Activated CD4-positive, alpha-beta memory T cell treated with anti-CD3 and anti-CD28 coated beads for 36 hours (primary cell): ENCODE measurements at regions of chr19 and their contacts with region 1.

Region 1: DNA sequence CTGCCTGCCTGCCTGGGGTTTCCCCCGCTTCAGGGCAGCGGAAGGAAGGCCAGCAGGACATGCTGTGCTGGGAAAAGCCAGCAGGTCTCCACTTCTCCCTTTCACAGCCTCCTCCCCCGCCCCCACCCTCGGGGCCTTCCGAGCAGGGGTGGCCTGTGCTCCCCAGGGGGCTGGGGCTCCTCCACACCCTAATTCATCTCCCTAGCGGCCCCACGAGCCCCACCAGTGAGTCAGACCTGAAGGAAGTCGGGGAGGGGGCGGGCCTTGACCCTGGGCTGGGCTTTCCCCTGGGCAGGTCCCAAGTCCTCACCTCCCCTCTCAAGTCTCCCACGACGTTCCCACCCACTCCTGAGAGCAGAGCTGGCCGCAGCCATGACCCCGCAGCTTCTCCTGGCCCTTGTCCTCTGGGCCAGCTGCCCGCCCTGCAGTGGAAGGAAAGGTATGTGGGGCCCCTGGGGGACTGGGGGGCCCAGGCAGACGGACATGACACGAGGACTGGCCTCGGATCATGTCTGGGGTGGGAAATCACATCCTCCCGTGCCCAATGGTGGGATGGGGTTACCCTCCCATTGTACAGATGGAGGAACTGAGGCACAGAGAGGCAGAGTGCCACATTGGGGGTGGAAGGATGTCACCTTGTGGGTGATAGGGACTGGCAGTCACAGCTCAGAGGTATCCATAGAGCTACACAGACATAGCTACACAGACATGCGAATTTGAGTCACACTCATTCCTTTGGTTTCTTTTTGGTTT is at the start of gene EBI3:
- DNase-seq: peak; percentile 87
- H3K4me3 Mint-ChIP-seq: no peak within 1 kb of the TSS
- H3K27ac Mint-ChIP-seq: peak within 1 kb of the TSS; percentile 89
- H3K4me1 Mint-ChIP-seq: no peaks in the 10 kb centered on the region
- H3K27me3 Mint-ChIP-seq: peaks cover 10% of the 10 kb centered on the region
- total RNA-seq, gene EBI3: 11.0 to 14.2 TPM

Region 2: GRCh38 chr19:3968556-3969434 is 260.6 kb before region 1 on chr19:
- CTCF ChIA-PET with region 1: no interaction called
- POLR2A ChIA-PET with region 1: no interaction called
- intact Hi-C with region 1: no loop called
- DNase-seq: no peak
- H3K4me3 Mint-ChIP-seq: peak overlapping the region; percentile 23
- H3K27ac Mint-ChIP-seq: no peak overlapping the region
- H3K4me1 Mint-ChIP-seq: peaks cover 17% of the 10 kb centered on the region
- H3K27me3 Mint-ChIP-seq: no peaks in the 10 kb centered on the region

Region 3: DNA sequence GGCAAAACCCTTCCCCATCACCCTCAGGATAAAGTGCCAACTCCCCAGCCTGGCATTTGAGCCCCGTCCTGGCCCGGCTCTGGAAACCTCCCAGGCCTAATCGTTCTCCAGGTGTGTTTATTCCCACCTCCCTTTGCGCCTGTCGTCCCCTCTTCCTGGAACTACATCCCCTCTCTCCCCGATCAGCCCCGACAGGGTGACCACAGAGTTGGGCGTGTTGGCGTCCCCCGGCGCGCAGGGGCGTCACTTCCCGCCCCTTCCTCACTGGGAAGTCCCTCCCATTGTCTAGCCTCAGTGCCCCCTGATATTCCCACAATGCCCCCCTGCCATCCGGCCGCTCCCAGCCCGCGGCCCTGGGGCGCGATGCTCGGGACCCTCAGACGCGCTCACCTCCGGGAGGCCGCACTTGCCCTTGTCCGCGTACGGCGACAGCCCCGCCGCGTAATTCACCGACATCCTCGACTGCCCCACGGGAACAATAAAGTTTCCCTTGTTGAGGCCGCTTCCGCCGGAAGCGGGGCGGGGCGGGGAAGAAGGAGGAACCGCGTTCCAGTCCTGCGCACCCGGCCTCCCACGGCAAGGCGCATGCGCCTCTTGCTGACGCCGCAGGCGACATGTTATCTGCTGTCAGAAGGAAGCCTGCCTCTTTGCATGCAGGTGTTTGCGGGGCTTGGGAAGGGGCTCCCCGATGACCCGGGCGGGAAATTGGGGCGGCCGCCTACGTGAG is 47.1 kb before region 1 on chr19 and contains the starts of genes ANKRD24 and SIRT6:
- CTCF ChIA-PET with region 1: no interaction called
- POLR2A ChIA-PET with region 1: no interaction called
- intact Hi-C with region 1: no loop called
- DNase-seq: peak; percentile 98
- H3K4me3 Mint-ChIP-seq: peak within 1 kb of the TSS; percentile 96
- H3K27ac Mint-ChIP-seq: peak within 1 kb of the TSS; percentile 92
- H3K4me1 Mint-ChIP-seq: peaks cover 29% of the 10 kb centered on the region
- H3K27me3 Mint-ChIP-seq: no peaks in the 10 kb centered on the region
- total RNA-seq, gene ANKRD24: 1.7 to 1.8 TPM
- total RNA-seq, gene SIRT6: 28.0 to 29.7 TPM

Region 4: DNA sequence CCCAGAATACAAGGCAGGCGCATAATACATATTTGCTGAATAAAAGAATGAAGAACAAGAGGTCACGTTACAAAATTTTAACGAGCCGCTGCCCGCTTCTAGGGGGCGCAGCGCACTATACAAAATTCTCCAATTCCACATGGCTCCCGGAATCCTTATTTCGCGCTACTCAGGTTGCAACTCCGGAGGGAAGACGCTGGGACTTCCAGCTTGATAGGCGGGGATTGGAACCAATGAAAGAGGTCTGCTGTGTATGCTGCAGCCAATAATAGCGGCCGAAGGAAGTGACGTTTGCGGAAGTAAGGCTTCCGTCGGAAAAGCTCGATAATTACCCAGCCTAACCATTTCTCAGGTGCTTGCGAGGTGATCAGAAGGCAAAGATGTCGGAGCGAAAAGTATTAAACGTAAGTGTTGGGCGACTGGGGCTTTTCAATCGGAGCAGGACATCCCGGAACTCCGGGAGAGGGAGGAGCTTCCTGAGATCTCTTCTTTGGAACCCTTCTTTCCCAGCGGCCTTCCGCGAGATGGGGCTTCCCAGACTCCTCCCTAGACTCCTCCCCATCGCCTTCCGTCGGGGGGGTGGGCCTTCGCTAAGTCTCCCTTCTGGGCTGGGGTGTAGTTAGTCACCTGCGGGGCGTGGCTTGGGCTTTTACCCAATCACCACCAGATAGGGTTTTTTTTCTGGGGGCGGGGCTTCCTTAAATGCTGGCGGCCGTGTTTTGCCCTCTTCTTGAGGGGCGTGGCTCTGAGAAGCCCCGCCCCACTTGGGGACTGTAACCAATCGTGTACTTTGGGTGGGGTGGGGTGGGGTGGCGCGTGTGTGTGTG is 17.6 kb after region 1 on chr19 and contains the start of gene YJU2:
- CTCF ChIA-PET with region 1: interaction called, 5 read pairs
- POLR2A ChIA-PET with region 1: interaction called, 4 read pairs
- intact Hi-C with region 1: loop called (anchors 2 kb)
- DNase-seq: peak; percentile 99
- H3K4me3 Mint-ChIP-seq: peak within 1 kb of the TSS; percentile 83
- H3K27ac Mint-ChIP-seq: peak within 1 kb of the TSS; percentile 96
- H3K4me1 Mint-ChIP-seq: peaks cover 19% of the 10 kb centered on the region
- H3K27me3 Mint-ChIP-seq: no peaks in the 10 kb centered on the region
- total RNA-seq, gene YJU2: 24.0 to 25.5 TPM